ENCODE measurements at regions of chr2 and their contacts with region 1.

Region 1: GRCh38 chr2:199459286-199460016 is 1.7 kb upstream of the SATB2 start:
- DNase-seq: peak in 1 of 2 donors; percentile 95
- H3K4me3 ChIP-seq: peak overlapping the region; percentile 87 to 98
- H3K27ac ChIP-seq: peak overlapping the region; percentile 85 to 93
- H3K4me1 ChIP-seq: peaks cover 27 to 31% of the 10 kb centered on the region in 2 donors
- H3K27me3 ChIP-seq: peaks cover 21% of the 10 kb centered on the region
- CTCF ChIP-seq: no peak

Region 2: DNA sequence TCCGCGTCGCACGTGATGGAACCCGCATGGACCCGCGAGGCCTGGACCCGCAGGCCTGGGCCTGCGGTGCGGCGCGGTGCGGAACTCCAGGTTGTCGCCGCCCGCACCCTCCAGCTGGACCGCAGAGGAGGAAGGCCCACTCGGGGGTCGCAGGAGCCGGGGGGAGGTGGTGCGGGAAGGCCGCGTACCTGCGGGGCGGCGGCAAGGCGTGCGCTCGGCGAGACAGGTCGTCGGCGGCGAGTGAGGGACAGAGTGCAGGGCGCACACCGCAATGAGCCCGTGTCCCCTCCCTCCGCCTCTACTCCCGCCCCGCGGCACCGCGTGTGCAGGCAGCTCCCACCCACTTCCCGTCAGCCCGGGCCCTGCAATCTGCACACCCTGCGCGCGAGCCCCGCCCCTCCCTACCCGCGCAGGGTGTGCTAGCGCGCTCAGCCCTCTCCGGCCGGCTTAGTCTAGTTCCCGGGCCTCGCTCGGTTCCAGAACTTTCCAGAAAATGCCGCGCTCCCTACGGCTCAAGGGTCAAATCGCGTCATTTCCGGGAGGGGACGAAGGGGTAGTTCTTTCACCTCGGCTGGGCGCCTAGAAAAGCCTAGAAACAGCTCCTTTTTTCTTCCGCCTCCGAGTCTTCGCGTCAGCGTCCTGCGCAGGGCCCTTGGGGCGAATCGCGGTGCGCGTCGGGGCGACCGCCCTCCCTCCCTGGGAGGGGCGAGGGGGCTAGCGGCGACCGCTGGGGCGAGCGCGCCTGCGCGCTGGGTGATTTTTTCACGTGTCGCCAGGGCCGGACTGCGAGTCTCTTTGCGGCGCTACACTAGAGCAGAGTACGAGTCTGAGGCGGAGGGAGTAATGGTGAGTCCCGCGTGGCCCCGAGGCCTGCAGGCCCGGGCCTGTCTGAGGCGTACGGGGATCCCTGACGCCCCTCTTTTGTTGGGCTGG is 1959.6 kb before region 1 on chr2 and contains the starts of genes HSPD1 and HSPE1:
- intact Hi-C with region 1: loop called (anchors 5 kb)
- DNase-seq: peak; percentile 93 to 99
- H3K4me3 ChIP-seq: peak within 1 kb of the TSS; percentile 94 to 98
- H3K27ac ChIP-seq: peak within 1 kb of the TSS; percentile 97 to 98
- H3K4me1 ChIP-seq: peaks cover 11 to 42% of the 10 kb centered on the region in 2 donors
- H3K27me3 ChIP-seq: no peaks in the 10 kb centered on the region
- CTCF ChIP-seq: peak in 1 of 3 experiments; percentile 29
- total RNA-seq, gene HSPD1: 110 TPM
- total RNA-seq, gene HSPE1: 72.7 TPM

Region 3: DNA sequence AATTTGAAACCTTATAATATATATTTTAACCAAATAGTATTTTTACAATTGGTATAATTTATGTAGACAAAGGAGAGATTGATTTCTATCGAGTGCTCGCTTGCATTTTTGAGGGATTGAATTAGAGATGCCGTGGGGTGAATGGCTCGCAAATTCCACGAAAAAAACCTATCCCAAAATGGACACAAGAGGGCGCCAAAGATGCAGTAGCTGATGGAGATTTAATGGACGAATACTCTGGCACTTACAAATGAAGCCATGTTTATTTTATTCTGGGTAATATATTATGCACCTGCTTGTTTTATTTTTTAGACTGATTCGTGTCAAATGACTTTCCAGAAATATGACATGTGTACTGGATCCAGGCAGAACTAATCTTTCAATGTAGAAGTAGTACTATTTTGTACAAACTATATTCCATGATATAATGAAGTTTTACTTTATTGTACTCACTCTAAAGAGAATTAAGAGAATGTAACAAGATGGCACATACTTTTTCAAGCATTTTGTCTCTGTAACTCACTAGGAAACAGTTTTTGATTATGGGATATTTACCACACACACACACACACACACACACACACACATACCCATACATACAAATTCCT is 1149.7 kb before region 1 on chr2:
- intact Hi-C with region 1: loop called (anchors 10 kb)
- DNase-seq: no peak
- H3K4me3 ChIP-seq: no peak overlapping the region
- H3K27ac ChIP-seq: no peak overlapping the region
- H3K4me1 ChIP-seq: no peaks in the 10 kb centered on the region
- H3K27me3 ChIP-seq: no peaks in the 10 kb centered on the region
- CTCF ChIP-seq: peak; percentile 23 to 82 (median 78)

Region 4: DNA sequence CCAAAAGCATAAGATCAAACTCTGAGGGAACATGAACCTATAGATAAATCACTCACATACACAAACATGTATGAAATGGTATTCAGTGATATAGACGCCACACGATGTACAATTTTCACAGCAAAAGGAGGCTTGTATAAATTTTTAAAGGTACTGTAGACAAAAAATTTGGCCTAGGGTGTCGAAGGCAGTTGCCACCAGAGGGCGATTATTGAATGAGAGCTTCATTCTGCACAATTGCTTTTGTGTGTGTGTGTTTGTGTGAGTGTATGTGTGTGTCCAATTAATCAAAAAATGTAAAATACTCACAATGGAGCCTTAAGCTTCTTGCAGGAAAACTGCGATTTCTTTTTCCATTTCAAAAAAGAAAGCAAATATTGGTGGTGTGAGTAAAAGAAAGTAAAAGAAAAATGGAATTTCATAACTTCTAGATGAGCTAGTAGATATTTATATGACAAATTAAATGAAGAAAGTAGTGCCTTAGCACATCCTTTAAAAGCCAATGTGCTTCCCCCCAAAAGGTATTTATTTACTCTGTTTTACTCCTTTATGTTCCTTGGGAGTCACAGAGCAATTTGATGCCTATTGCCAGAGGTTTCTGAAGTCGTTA is 801.8 kb before region 1 on chr2:
- intact Hi-C with region 1: loop called (anchors 10 kb)
- DNase-seq: no peak
- H3K4me3 ChIP-seq: no peak overlapping the region
- H3K27ac ChIP-seq: no peak overlapping the region
- H3K4me1 ChIP-seq: no peaks in the 10 kb centered on the region
- H3K27me3 ChIP-seq: no peaks in the 10 kb centered on the region
- CTCF ChIP-seq: peak in 2 of 3 experiments; percentile 32 to 41

Region 5: DNA sequence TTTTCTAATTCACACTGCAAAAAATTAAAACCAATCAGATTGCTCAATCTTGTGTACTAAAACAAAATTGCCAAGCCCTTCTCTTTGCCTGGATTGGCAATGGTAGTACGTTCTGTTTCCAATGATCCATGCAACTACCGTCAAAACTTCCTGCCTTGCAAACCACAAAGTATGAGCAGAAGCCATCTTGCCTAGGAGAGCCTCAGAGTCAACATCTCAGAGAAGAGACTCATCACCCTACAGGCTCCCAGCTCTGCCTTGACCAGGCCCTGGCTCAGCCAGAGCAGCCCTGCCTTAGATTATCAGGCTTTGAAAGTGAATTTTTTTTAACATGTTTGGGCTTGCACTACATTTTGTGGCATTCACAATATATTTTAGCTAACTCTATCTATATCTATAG is 575.8 kb before region 1 on chr2:
- intact Hi-C with region 1: loop called (anchors 5 kb)
- DNase-seq: no peak
- H3K4me3 ChIP-seq: no peak overlapping the region
- H3K27ac ChIP-seq: no peak overlapping the region
- H3K4me1 ChIP-seq: peaks cover 0 to 16% of the 10 kb centered on the region in 2 donors
- H3K27me3 ChIP-seq: no peaks in the 10 kb centered on the region
- CTCF ChIP-seq: no peak

Region 6: GRCh38 chr2:199303728-199304177 is 155.7 kb before region 1 on chr2:
- intact Hi-C with region 1: loop called (anchors 5 kb)
- DNase-seq: peak; percentile 25 to 86
- H3K4me3 ChIP-seq: peak overlapping the region in 1 of 2 donors; percentile 20
- H3K27ac ChIP-seq: peak overlapping the region; percentile 81 to 83
- H3K4me1 ChIP-seq: peaks cover 0 to 20% of the 10 kb centered on the region in 2 donors
- H3K27me3 ChIP-seq: no peaks in the 10 kb centered on the region
- CTCF ChIP-seq: no peak

Region 7: DNA sequence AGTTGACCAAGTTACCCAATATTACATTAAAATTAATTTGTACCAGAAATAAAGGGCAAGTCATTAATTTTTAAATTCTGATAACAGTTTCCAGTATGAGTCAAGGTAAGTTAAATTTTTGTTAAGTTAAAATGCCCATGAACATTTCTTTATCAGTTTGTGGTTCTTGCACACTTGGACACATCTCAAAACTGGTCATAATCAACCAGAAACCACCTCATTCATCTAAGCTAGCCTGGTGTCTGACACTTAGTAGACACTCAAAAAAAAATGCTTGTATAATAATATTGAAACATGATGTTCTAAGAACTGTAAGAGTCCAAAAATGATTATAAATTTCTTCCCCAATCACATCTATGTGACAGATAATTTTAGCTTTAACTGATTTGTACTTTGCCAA is 64.1 kb before region 1 on chr2:
- intact Hi-C with region 1: no loop called
- DNase-seq: no peak
- H3K4me3 ChIP-seq: no peak overlapping the region
- H3K27ac ChIP-seq: no peak overlapping the region
- H3K4me1 ChIP-seq: no peaks in the 10 kb centered on the region
- H3K27me3 ChIP-seq: no peaks in the 10 kb centered on the region
- CTCF ChIP-seq: no peak

Region 8: GRCh38 chr2:199940373-199940772 is 480.9 kb after region 1 on chr2:
- intact Hi-C with region 1: no loop called
- DNase-seq: no peak
- H3K4me3 ChIP-seq: no peak overlapping the region
- H3K27ac ChIP-seq: no peak overlapping the region
- H3K4me1 ChIP-seq: no peaks in the 10 kb centered on the region
- H3K27me3 ChIP-seq: no peaks in the 10 kb centered on the region
- CTCF ChIP-seq: peak in 1 of 3 experiments; percentile 8